Heart right ventricle (tissue), 16 donors: ENCODE measurements at regions of chr14 and their contacts with region 1.

Region 1: GRCh38 chr14:102694530-102695166 is 82.6 kb upstream of the TRAF3 start:
- DNase-seq: peak in 1 of 2 donors; percentile 82
- ATAC-seq: peak; percentile 55 to 83 (median 78)
- H3K4me3 ChIP-seq: no peak overlapping the region
- H3K27ac ChIP-seq: no peak overlapping the region
- H3K4me1 ChIP-seq: peaks cover 0 to 43% (median 36%) of the 10 kb centered on the region in 9 donors
- H3K27me3 ChIP-seq: no peaks in the 10 kb centered on the region
- CTCF ChIP-seq: peak; percentile 60 to 85 (median 78)

Region 2: DNA sequence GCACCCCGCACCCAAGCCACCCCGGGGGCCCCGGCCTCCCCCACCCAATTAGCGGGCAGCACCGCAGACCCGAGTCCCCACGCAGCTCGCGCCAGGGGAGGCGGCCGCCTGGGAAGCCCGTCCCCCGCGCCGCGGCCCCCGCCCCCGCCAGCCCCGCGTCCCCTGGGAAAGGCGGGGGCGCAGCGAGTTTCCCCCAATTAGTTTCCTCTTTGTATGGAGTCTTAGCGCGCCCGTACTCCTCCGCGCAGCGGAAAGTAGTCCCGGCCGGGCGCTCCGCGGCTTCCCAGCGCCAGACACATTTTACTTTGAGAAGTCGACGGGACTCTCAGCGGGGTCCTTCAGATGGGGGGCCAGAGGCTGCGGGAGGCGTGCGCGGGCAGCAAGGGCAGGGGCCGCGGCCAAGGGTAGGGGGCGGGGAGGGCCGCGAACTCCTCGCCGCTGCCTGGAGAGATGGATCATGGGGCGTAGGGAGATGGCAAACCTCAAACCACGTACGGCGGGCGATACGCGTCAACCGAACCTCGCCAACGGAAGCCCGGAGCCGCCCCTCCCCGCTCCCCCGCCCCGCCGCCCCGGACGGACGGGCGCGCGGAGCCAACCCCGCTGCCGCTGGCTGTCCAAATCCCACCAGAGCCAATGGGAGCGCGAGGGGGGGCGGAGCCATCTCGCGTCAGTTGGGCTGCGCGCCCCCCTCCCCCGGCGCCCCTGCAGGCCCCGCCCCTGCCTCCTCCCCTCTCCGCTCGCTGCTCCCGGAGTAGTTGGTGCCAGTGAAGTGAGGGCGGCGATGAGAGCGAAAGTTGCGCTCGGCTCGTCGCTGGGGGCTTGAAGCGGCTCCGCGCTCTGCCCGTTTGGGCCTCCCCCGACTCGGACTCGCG is 102.5 kb before region 1 on chr14 and contains the start of gene RCOR1:
- intact Hi-C with region 1: loop called in 3 of 10 experiments (anchors 10 kb)
- DNase-seq: peak; percentile 98
- ATAC-seq: peak; percentile 94 to 97 (median 96)
- H3K4me3 ChIP-seq: peak within 1 kb of the TSS; percentile 69 to 98 (median 93)
- H3K27ac ChIP-seq: peak within 1 kb of the TSS; percentile 87 to 100 (median 98)
- H3K4me1 ChIP-seq: peaks cover 0 to 36% (median 29%) of the 10 kb centered on the region in 9 donors
- H3K27me3 ChIP-seq: no peaks in the 10 kb centered on the region
- CTCF ChIP-seq: no peak
- total RNA-seq, gene RCOR1: 11.1 to 16.9 (median 13.2) TPM

Region 3: GRCh38 chr14:102922490-102923200 is 228.0 kb after region 1 on chr14 and contains the start of gene AMN:
- intact Hi-C with region 1: loop called in 8 of 10 experiments (anchors 5 to 10 kb)
- DNase-seq: no peak
- ATAC-seq: peak in 2 of 8 donors; percentile 17 to 42
- H3K4me3 ChIP-seq: peak within 1 kb of the TSS in 9 of 10 donors; percentile 5 to 31 (median 20)
- H3K27ac ChIP-seq: no peak within 1 kb of the TSS
- H3K4me1 ChIP-seq: peaks cover 0 to 17% (median 12%) of the 10 kb centered on the region in 9 donors
- H3K27me3 ChIP-seq: peaks cover 8 to 67% (median 57%) of the 10 kb centered on the region in 7 donors
- CTCF ChIP-seq: no peak
- total RNA-seq, gene AMN: 0.40 TPM in 1 of 10 donors, not detected in the others

Region 4: DNA sequence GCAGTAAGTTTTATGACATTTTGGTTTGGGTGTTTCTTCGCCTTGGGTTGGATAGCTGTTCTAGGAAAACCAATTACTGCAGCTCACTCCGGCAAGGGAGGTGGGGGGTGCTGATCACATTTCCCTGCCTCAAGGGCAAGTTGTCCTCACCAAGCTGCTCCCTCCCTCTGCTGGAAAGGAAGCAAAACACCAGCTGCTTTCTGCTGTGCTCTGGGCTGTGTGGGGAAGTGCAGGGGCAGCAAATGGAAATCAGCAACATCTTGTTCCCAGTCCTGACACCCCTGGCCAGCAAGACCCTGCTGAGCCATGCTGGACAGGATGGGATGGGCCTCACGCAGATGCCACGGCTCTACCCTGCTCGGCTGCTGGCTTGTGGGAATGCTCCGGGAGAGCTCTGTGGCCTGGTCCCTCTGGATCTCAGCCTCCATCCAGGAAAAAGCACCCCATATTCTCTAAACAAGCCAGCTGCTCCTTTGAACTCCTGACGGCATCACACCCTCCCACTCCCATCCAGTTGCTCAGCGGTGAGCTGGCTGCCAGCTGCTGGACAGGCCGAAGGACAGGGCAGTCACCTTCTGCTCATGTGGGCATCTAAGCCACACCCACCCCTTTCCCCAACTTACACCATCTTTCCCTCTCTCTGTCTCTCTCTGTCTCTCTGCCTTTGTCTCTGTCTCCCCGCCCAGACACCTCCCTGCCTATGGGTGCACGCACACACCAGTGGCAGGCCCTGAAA is 587.0 kb after region 1 on chr14:
- intact Hi-C with region 1: loop called in 1 of 10 experiments (anchors 10 kb)
- DNase-seq: peak in 1 of 2 donors; percentile 33
- ATAC-seq: peak; percentile 48 to 88 (median 80)
- H3K4me3 ChIP-seq: no peak overlapping the region
- H3K27ac ChIP-seq: no peak overlapping the region
- H3K4me1 ChIP-seq: peaks cover 0 to 19% (median 10%) of the 10 kb centered on the region in 9 donors
- H3K27me3 ChIP-seq: peaks cover 0 to 95% (median 60%) of the 10 kb centered on the region in 7 donors
- CTCF ChIP-seq: peak in 7 of 9 donors; percentile 20 to 45 (median 39)